RWPE1 (cell line): ENCODE measurements at regions of chr1 and their contacts with region 1.

Region 1: GRCh38 chr1:53946252-53947097 is at the start of gene LRRC42:
- DNase-seq: peak; percentile 93
- H3K27ac ChIP-seq: peak within 1 kb of the TSS; percentile 90
- CTCF ChIP-seq: peak; percentile 54

Region 2: DNA sequence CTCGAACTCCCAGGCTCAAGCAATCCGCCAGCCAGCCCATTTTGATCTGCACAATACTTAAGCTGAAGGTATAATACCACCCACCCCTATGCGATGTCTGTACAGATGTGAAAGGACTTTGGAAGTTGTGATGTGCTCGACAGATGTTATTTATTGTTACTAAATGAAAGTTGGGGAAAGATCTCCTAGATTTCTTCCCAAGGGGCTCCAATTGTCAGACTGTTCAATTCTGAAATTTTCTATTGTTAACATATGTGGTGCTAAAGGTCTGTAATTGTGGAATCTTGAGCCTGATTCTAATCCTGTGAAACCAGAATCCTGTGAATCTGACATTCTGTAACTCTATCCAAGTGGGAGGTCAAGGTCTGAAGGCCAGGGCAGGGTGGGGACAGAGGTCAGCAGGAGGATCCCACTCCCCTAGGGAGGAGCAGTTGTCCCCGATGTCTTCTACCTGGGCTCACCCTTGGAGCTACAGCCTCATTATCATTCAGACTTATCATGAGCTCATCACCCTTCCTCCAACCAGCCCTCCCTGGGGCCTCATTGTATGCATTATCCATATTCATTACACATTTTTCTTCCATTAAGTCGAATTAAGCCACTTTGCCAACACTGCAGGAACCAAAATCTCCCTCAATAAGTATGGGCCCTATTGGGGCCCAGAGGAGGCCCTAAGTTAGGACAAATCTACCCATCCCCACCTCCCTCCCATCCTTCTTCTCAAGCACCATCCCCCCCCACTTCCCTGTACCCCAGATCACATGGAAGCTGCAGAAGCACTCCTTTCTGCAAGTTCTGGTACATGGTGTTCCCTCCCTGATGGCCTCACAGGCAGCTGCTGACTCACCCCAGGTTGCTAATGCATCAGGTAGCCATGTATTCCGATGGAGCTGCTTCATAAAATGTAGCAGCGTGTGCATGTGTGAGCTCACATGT is 1281.2 kb before region 1 on chr1:
- CTCF ChIA-PET with region 1: no interaction called
- POLR2A ChIA-PET with region 1: interaction called, 13 read pairs
- DNase-seq: peak; percentile 69
- H3K27ac ChIP-seq: peak overlapping the region; percentile 76
- CTCF ChIP-seq: no peak

Region 3: GRCh38 chr1:53913352-53914033 is 33.0 kb before region 1 on chr1:
- CTCF ChIA-PET with region 1: no interaction called
- POLR2A ChIA-PET with region 1: no interaction called
- DNase-seq: no peak
- H3K27ac ChIP-seq: no peak overlapping the region
- CTCF ChIP-seq: no peak